Spleen (tissue), 13 donors: ENCODE measurements at regions of chr1 and their contacts with region 1.

Region 1: GRCh38 chr1:193019442-193020026 is 39.6 kb downstream of the UCHL5 start:
- DNase-seq: no peak
- H3K4me3 ChIP-seq: no peak overlapping the region
- H3K27ac ChIP-seq: peak overlapping the region in 1 of 8 donors; percentile 39
- H3K4me1 ChIP-seq: peaks cover 0 to 14% (median 3%) of the 10 kb centered on the region in 6 donors
- H3K27me3 ChIP-seq: no peaks in the 10 kb centered on the region
- CTCF ChIP-seq: peak in 8 of 11 experiments; percentile 11 to 67 (median 56)
- POLR2A ChIP-seq: no peak

Region 2: DNA sequence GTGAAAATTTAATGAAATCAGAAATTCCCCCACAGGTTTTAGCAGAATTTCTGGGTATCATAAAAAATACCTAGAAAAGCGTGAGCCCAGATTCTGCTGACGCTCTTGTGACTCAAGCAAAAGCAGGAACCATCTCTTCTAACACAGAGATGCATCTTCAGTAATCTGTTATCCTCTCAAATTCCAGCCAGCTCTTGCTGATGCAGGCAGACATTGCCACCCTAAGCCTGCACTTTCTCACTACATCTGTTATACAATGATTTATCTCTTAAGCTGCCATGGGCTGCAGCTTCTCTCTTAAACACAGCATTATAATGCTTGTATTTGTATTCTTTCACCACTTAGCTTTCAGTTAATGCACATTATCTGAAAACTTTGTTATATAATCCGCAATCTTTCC is 556.9 kb before region 1 on chr1:
- intact Hi-C with region 1: loop called (anchors 10 kb)
- DNase-seq: no peak
- H3K4me3 ChIP-seq: no peak overlapping the region
- H3K27ac ChIP-seq: no peak overlapping the region
- H3K4me1 ChIP-seq: no peaks in the 10 kb centered on the region
- H3K27me3 ChIP-seq: peaks cover 0 to 15% (median 0%) of the 10 kb centered on the region in 7 donors
- CTCF ChIP-seq: no peak
- POLR2A ChIP-seq: no peak

Region 3: GRCh38 chr1:192808518-192809306 is 210.8 kb before region 1 on chr1 and contains the start of gene RGS2:
- intact Hi-C with region 1: loop called (anchors 5 kb)
- DNase-seq: peak; percentile 98
- H3K4me3 ChIP-seq: peak within 1 kb of the TSS; percentile 61 to 85 (median 64)
- H3K27ac ChIP-seq: peak within 1 kb of the TSS; percentile 75 to 98 (median 95)
- H3K4me1 ChIP-seq: peaks cover 3 to 70% (median 48%) of the 10 kb centered on the region in 6 donors
- H3K27me3 ChIP-seq: no peaks in the 10 kb centered on the region
- CTCF ChIP-seq: peak in 3 of 11 experiments; percentile 4 to 30 (median 24)
- POLR2A ChIP-seq: peak; percentile 97 to 99 (median 98)
- total RNA-seq, gene RGS2: 144 to 377 (median 175) TPM

Region 4: GRCh38 chr1:193121616-193122593 is 102.4 kb after region 1 on chr1 and contains the start of gene CDC73:
- intact Hi-C with region 1: no loop called
- DNase-seq: peak; percentile 100
- H3K4me3 ChIP-seq: peak within 1 kb of the TSS; percentile 53 to 87 (median 68)
- H3K27ac ChIP-seq: peak within 1 kb of the TSS; percentile 85 to 99 (median 97)
- H3K4me1 ChIP-seq: peaks cover 15 to 53% (median 46%) of the 10 kb centered on the region in 6 donors
- H3K27me3 ChIP-seq: no peaks in the 10 kb centered on the region
- CTCF ChIP-seq: peak; percentile 95 to 99 (median 99)
- POLR2A ChIP-seq: peak; percentile 45 to 75 (median 56)
- total RNA-seq, gene CDC73: 32.4 to 76.7 (median 62.7) TPM